Ascending aorta (tissue), 2 donors: ENCODE measurements at regions of chr9 and their contacts with region 1.

Region 1: GRCh38 chr9:89791754-89792153 is 186.9 kb downstream of the GADD45G start:
- DNase-seq: no peak
- H3K4me3 ChIP-seq: no peak overlapping the region
- H3K27ac ChIP-seq: no peak overlapping the region
- H3K4me1 ChIP-seq: no peaks in the 10 kb centered on the region
- H3K27me3 ChIP-seq: no peaks in the 10 kb centered on the region
- CTCF ChIP-seq: no peak

Region 2: DNA sequence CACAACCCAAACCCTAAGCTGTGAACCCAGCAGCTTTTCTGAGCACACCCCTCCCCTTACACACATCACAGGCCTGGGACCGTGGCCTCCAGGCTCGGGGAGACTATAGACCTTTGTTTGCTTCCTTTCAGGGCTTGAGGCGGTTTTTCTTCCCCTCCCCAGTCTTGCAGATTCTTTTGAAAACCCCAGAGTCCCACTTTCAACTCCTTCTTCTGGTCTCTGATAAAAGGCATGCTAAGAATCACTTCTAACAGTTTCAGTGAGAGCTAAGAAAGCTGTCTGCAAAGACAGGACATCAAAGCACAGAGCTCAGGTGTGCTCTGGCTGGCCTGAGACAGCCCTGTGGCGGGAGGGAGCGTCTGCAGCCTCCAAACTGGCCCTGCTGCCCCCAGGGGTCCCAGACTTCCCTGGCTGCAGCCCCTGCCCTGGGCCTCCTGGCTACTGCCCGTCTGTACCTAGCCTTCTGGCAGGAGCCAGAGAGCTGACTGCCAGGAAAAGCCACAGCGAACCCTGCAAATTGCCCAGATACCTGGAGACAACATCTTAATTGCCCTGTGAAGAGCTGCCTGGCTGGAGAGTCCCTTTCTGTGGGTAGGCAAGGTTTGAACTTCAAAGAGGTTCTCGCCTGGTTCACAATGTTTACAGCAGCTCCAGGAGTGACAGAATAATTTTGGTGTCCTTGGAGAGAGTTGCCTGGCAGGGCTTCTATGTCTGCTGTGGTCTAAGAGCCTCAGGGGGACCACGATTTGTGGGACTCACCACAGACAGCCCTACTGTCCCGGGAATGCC is 48.0 kb before region 1 on chr9:
- intact Hi-C with region 1: loop called (anchors 5 kb)
- DNase-seq: no peak
- H3K4me3 ChIP-seq: no peak overlapping the region
- H3K27ac ChIP-seq: no peak overlapping the region
- H3K4me1 ChIP-seq: no peaks in the 10 kb centered on the region
- H3K27me3 ChIP-seq: no peaks in the 10 kb centered on the region
- CTCF ChIP-seq: no peak